CD4-positive, alpha-beta T cell (primary cell): ENCODE measurements at regions of chr1 and their contacts with region 1.

Region 1: GRCh38 chr1:23403735-23404486 is 20.6 kb downstream of the TCEA3 start:
- DNase-seq: peak; percentile 70 to 88 (median 78)
- ATAC-seq: peak; percentile 98
- H3K4me3 ChIP-seq: no peak overlapping the region
- H3K4me3 Mint-ChIP-seq: no peak overlapping the region
- H3K27ac ChIP-seq: no peak overlapping the region
- H3K27ac Mint-ChIP-seq: no peak overlapping the region
- H3K4me1 ChIP-seq: peaks cover 12% of the 10 kb centered on the region
- H3K4me1 Mint-ChIP-seq: peaks cover 10% of the 10 kb centered on the region
- H3K27me3 ChIP-seq: no peaks in the 10 kb centered on the region
- H3K27me3 Mint-ChIP-seq: no peaks in the 10 kb centered on the region
- CTCF ChIP-seq: peak; percentile 96

Region 2: DNA sequence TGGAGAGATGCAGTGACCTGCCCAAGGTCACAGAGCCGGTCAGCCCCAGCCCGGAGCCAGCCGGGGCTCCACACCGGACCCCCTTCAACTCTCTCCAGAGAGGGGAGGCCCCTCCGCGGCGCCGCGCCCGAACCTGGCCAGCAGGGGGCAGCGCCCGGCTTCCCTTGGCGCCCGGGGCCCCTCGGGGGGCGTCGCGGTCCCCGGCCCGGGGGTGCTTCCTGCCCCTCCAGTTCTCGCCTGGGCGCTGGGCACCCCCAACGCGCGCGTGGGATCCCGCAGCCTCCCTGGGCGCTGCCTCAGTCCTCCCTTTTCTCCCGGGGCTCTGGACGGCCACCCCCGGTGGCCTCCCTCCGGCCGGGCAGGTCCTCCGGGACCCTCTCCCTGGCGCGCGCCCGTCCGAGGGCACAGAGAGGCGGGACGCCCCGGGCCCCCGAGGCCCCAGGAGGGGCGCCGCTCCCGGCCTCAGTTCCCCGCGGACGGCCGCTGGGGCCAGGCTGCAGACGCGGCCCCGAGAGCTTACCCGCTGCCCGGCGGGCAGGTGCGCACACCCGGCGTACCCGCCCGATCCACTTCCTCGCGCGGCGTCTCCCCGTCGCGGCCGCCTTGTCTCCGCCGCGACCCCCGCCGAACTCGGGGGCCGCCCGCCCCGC is 187.0 kb before region 1 on chr1:
- CTCF ChIA-PET with region 1: no interaction called
- POLR2A ChIA-PET with region 1: no interaction called
- intact Hi-C with region 1: loop called (anchors 2 to 5 kb)
- DNase-seq: peak in 10 of 14 experiments; percentile 7 to 40 (median 22)
- ATAC-seq: peak; percentile 44
- H3K4me3 ChIP-seq: no peak overlapping the region
- H3K4me3 Mint-ChIP-seq: no peak overlapping the region
- H3K27ac ChIP-seq: no peak overlapping the region
- H3K27ac Mint-ChIP-seq: no peak overlapping the region
- H3K4me1 ChIP-seq: peaks cover 10% of the 10 kb centered on the region
- H3K4me1 Mint-ChIP-seq: peaks cover 6% of the 10 kb centered on the region
- H3K27me3 ChIP-seq: peaks cover 40 to 66% of the 10 kb centered on the region in 2 experiments
- H3K27me3 Mint-ChIP-seq: peaks cover 84% of the 10 kb centered on the region
- CTCF ChIP-seq: peak; percentile 28

Region 3: GRCh38 chr1:23322770-23323169 is 81.1 kb before region 1 on chr1:
- CTCF ChIA-PET with region 1: no interaction called
- POLR2A ChIA-PET with region 1: no interaction called
- intact Hi-C with region 1: loop called in 1 of 2 experiments (anchors 5 kb)
- DNase-seq: no peak
- ATAC-seq: no peak
- H3K4me3 ChIP-seq: no peak overlapping the region
- H3K4me3 Mint-ChIP-seq: no peak overlapping the region
- H3K27ac ChIP-seq: no peak overlapping the region
- H3K27ac Mint-ChIP-seq: peak overlapping the region; percentile 64
- H3K4me1 ChIP-seq: no peaks in the 10 kb centered on the region
- H3K4me1 Mint-ChIP-seq: peaks cover 35% of the 10 kb centered on the region
- H3K27me3 ChIP-seq: no peaks in the 10 kb centered on the region
- H3K27me3 Mint-ChIP-seq: no peaks in the 10 kb centered on the region
- CTCF ChIP-seq: no peak

Region 4: GRCh38 chr1:23344111-23344986 is 59.6 kb before region 1 on chr1 and contains the start of gene HNRNPR:
- CTCF ChIA-PET with region 1: interaction called, 5 read pairs
- POLR2A ChIA-PET with region 1: interaction called, 10 read pairs
- intact Hi-C with region 1: loop called (anchors 2 to 5 kb)
- DNase-seq: peak; percentile 96 to 100 (median 99)
- ATAC-seq: peak; percentile 96
- H3K4me3 ChIP-seq: peak within 1 kb of the TSS; percentile 73
- H3K4me3 Mint-ChIP-seq: peak within 1 kb of the TSS; percentile 96
- H3K27ac ChIP-seq: peak within 1 kb of the TSS; percentile 69 to 70
- H3K27ac Mint-ChIP-seq: peak within 1 kb of the TSS; percentile 92
- H3K4me1 ChIP-seq: peaks cover 8% of the 10 kb centered on the region
- H3K4me1 Mint-ChIP-seq: peaks cover 43% of the 10 kb centered on the region
- H3K27me3 ChIP-seq: no peaks in the 10 kb centered on the region
- H3K27me3 Mint-ChIP-seq: no peaks in the 10 kb centered on the region
- CTCF ChIP-seq: peak; percentile 11
- total RNA-seq, gene HNRNPR: 92.0 to 93.3 TPM